HAP-1 (cell line): ENCODE measurements at regions of chr3 and their contacts with region 1.

Region 1: GRCh38 chr3:13495921-13496723 is 16.0 kb downstream of the HDAC11 start:
- DNase-seq: peak; percentile 75 to 82
- H3K4me3 ChIP-seq: no peak overlapping the region
- H3K4me1 ChIP-seq: peaks cover 6% of the 10 kb centered on the region
- H3K27me3 ChIP-seq: no peaks in the 10 kb centered on the region

Region 2: DNA sequence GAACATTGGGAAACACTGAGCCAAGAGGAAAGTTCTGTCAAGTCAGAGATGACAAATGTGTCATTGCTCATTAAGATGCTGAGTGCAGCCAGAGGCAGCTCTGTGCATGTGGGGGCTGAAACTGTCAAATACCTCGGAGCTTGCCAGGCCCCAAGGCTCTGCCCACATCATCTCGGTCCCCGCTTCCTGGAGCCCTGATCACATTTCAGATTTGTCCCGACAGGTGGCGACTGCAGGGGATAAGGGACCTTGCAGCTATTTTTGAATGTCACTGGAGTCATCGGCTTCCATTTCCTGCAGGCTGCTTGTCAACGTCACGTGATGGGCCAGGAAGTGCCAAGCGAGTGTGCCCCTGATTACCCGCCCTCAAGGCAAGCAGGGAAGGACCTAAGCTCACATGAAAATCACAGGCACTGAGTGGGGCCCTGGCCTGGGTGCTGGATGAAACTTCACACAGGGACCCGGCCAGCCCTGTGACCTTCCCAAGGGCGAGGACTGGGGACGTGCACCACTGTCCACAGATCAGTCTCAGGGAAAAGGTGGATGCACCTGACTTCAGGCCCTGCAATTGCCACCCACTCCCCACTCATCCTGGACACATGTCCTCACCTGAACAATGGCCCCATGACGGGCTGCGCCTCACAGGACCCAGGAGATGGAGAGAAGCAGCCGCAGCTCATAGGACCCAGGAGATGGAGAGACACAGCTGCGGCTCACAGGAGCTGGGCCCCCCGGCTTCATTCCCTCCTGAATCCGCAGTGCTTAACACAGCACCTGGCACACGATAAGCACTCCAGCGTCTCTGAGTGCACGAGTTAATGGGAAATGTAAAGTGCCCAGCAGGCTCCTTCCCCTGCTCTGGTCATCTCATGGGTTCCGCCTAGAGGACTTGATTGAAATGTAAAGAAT is 149.4 kb before region 1 on chr3:
- in situ Hi-C with region 1: no loop called
- DNase-seq: no peak
- H3K4me3 ChIP-seq: no peak overlapping the region
- H3K4me1 ChIP-seq: no peaks in the 10 kb centered on the region
- H3K27me3 ChIP-seq: no peaks in the 10 kb centered on the region

Region 3: DNA sequence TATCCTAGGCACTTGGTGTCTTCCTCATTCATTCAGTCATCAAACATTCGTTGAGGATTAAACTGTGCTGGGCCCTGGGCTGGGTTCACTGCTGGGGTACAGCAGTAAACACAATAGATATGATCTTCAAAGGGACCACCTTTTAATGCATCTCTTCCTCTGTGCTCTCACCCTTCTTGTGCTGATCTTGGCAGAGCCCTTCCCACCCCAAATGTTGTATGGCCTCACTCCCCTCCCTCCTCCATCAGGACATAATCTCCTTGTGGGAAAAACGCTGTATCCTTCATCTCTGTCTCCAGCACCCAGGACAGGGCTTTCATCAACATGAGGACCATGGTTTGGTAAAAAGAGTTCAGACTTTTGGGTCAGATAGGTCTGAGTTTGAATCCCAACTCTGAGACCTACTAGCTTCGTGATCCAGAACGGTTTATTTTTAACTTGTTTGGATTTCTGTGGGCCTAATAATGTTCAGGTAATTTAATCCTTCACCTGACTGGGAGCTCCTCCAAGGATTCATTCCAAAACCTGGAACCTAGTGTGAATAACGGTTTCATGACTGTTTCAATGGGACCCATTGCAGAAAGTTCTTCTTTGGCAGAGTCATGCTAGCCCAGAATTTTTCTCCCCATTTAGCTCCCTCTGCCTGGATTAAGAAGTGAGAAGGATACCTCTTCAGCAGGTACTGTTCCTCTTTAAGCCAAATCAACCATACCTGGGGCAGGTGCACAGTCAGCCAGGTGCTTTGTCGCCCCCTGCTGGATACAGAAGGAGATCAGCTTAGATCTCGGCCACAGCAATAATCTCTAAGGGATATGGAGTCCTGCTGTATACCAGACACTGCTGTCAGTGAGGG is 389.0 kb after region 1 on chr3:
- in situ Hi-C with region 1: loop called (anchors 5 kb)
- DNase-seq: peak; percentile 28 to 73
- H3K4me3 ChIP-seq: no peak overlapping the region
- H3K4me1 ChIP-seq: no peaks in the 10 kb centered on the region; the same call in 1 of the 2 replicates
- H3K27me3 ChIP-seq: peaks cover 31% of the 10 kb centered on the region